ENCODE measurements at regions of chr11 and their contacts with region 1.

Region 1: GRCh38 chr11:134423106-134423505 is 11.1 kb upstream of the B3GAT1 start:
- DNase-seq: peak; percentile 34
- H3K4me3 ChIP-seq: no peak overlapping the region
- H3K27ac ChIP-seq: no peak overlapping the region
- H3K4me1 ChIP-seq: no peaks in the 10 kb centered on the region
- H3K27me3 ChIP-seq: peaks cover 0 to 12% (median 0%) of the 10 kb centered on the region in 7 donors
- CTCF ChIP-seq: no peak
- POLR2A ChIP-seq: no peak

Region 2: GRCh38 chr11:134634897-134635831 is 212.1 kb after region 1 on chr11:
- intact Hi-C with region 1: loop called (anchors 5 kb)
- DNase-seq: peak; percentile 62
- H3K4me3 ChIP-seq: no peak overlapping the region
- H3K27ac ChIP-seq: no peak overlapping the region
- H3K4me1 ChIP-seq: no peaks in the 10 kb centered on the region
- H3K27me3 ChIP-seq: peaks cover 0 to 33% (median 0%) of the 10 kb centered on the region in 7 donors
- CTCF ChIP-seq: no peak
- POLR2A ChIP-seq: no peak

Measured in spleen (tissue), 13 donors.